SK-MEL-5 (cell line): ENCODE measurements at regions of chr9 and their contacts with region 1.

Region 1: GRCh38 chr9:20593551-20593950 is 28.7 kb downstream of the MLLT3 start:
- DNase-seq: no peak

Region 2: DNA sequence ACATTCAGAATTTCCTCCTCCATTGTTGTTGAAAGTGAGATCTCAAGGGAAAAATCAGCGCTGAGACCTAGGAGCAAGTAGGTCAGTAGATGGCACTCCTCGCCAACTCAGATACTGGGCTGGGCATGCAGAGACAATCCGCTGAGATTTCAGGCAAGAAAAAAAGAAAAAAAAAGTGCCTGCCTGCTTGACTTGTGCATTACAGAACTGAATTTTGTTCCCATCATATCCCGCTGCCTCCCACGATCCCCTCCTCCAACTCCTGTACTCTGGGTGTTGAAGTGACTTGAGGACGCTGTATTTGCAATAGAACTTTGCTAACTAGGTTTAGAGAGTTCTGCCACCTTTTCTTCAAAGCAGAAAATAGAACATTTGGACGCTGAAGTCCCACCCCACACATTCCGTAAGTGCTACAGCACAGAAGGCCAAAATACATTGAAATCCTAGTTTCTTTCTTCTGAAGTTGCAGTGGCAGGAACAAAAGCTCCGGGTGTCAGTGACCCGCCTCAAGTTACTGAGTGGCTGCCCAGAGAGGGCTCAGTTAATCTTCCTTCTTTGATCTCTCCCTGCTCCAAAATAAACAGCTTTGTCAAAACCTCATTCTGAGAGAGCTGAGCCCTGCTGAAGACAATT is 237.0 kb before region 1 on chr9:
- in situ Hi-C with region 1: loop called (anchors 25 kb)
- DNase-seq: peak; percentile 79